ENCODE measurements at regions of chr17 and their contacts with region 1.

Region 1: DNA sequence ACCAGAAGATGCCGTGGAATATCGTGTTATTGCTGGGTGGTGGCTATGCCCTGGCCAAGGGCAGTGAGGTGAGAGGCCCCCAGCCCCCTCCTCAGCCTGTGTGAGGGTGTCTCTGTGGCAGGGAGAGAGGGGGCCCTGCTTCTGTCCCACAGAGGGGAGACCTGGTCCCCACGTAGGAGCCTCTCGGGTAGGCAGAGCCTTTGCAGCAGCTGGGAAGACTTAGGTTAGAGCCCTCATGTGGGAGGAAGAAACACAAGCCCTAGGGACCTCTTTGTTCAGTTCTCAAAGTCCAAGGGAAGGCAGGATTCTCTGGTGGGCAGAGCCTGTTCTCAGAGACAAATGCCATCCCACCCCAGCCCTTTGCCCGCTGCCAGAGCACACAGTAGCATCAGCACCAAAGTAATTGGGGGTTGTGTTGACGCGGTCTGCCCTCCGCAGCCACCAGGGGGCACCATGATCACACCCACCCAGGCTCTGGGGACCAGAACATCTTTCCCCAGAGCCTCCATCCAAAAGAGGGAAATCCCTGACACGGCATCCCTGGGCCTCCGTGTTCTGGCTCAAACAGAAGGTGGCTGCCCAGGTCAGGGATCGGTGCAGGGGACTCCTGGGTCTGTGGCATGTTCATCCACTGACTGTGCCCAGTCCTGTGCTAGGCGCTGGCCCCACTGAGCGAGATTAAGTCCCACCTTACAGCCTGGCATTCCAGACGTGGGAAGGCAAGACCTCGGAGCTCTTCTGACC is 11.5 kb upstream of the FOXN1 start:
- DNase-seq: no peak
- ATAC-seq: peak; percentile 95
- H3K4me3 ChIP-seq: no peak overlapping the region
- H3K27ac ChIP-seq: no peak overlapping the region
- H3K4me1 ChIP-seq: peaks cover 9% of the 10 kb centered on the region
- H3K27me3 ChIP-seq: no peaks in the 10 kb centered on the region
- CTCF ChIP-seq: peak; percentile 91 to 99 (median 92); a peak in 5 of 6 replicates
- EP300 ChIP-seq: no peak
- POLR2A ChIP-seq: no peak
- RAD21 ChIP-seq: peak; percentile 95

Region 2: DNA sequence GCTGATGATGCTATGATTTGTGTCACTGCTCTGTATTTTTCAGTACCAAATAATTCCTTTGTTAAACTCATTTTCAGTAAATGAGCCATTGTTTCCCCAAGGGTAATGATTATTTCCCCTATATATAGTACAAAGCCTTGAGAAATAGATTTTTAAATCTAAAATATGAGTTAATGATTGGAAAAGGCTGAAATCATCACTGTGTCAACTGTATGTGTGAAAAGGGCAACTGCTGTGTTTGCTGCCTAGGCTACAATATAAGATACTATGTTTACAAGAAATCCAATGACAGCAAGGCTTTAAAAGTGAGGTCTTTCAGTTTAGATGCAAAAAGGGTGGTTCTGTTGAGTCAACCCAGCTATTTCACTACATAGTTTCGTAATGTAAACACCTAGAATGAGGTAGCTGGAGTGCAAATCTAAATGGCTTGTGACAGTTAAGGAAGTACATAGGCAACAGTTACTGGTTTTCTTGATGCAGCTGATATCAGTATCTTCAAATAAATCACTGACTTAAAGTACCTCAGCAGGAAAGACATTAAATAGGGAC is 436.8 kb before region 1 on chr17:
- CTCF ChIA-PET with region 1: no interaction called
- POLR2A ChIA-PET with region 1: no interaction called
- RAD21 ChIA-PET with region 1: no interaction called
- SMC1A ChIA-PET with region 1: no interaction called
- in situ Hi-C with region 1: no loop called
- intact Hi-C with region 1: no loop called
- DNase-seq: peak; percentile 84
- ATAC-seq: peak; percentile 89
- H3K4me3 ChIP-seq: peak overlapping the region; percentile 22; the same call in 1 of the 2 replicates
- H3K27ac ChIP-seq: peak overlapping the region; percentile 66
- H3K4me1 ChIP-seq: peaks cover 52% of the 10 kb centered on the region
- H3K27me3 ChIP-seq: no peaks in the 10 kb centered on the region
- CTCF ChIP-seq: no peak
- EP300 ChIP-seq: peak; percentile 98 to 99
- POLR2A ChIP-seq: no peak
- RAD21 ChIP-seq: no peak

Region 3: GRCh38 chr17:28484296-28484695 is 10.3 kb before region 1 on chr17:
- CTCF ChIA-PET with region 1: interaction called, 18 read pairs
- POLR2A ChIA-PET with region 1: no interaction called
- RAD21 ChIA-PET with region 1: no interaction called
- SMC1A ChIA-PET with region 1: interaction called, 4 read pairs
- in situ Hi-C with region 1: no loop called
- intact Hi-C with region 1: no loop called
- DNase-seq: peak; percentile 79
- ATAC-seq: peak; percentile 98
- H3K4me3 ChIP-seq: peak overlapping the region; percentile 33; the same call in 1 of the 2 replicates
- H3K27ac ChIP-seq: peak overlapping the region; percentile 89
- H3K4me1 ChIP-seq: peaks cover 25% of the 10 kb centered on the region
- H3K27me3 ChIP-seq: no peaks in the 10 kb centered on the region
- CTCF ChIP-seq: no peak
- EP300 ChIP-seq: peak; percentile 39 to 45; a peak in 1 of 4 replicates
- POLR2A ChIP-seq: peak; percentile 42; the same call in 1 of the 2 replicates
- RAD21 ChIP-seq: 0 out of 2 replicates have a peak, but pooled peaks have one; percentile 10

Region 4: GRCh38 chr17:28540231-28540630 is 45.6 kb after region 1 on chr17:
- CTCF ChIA-PET with region 1: interaction called, 316 read pairs
- POLR2A ChIA-PET with region 1: interaction called, 4 read pairs
- RAD21 ChIA-PET with region 1: interaction called, 26 read pairs
- SMC1A ChIA-PET with region 1: interaction called, 32 read pairs
- in situ Hi-C with region 1: loop called (anchors 5 kb)
- intact Hi-C with region 1: loop called (anchors 1 kb)
- DNase-seq: no peak
- ATAC-seq: no peak
- H3K4me3 ChIP-seq: no peak overlapping the region
- H3K27ac ChIP-seq: no peak overlapping the region
- H3K4me1 ChIP-seq: no peaks in the 10 kb centered on the region
- H3K27me3 ChIP-seq: no peaks in the 10 kb centered on the region
- CTCF ChIP-seq: no peak
- EP300 ChIP-seq: no peak
- POLR2A ChIP-seq: no peak
- RAD21 ChIP-seq: no peak

Region 5: GRCh38 chr17:28545787-28546415 is 51.3 kb after region 1 on chr17:
- CTCF ChIA-PET with region 1: interaction called, 316 read pairs
- POLR2A ChIA-PET with region 1: interaction called, 48 read pairs
- RAD21 ChIA-PET with region 1: interaction called, 37 read pairs
- SMC1A ChIA-PET with region 1: interaction called, 53 read pairs
- in situ Hi-C with region 1: loop called (anchors 5 kb)
- intact Hi-C with region 1: no loop called
- DNase-seq: no peak
- ATAC-seq: no peak
- H3K4me3 ChIP-seq: no peak overlapping the region
- H3K27ac ChIP-seq: no peak overlapping the region
- H3K4me1 ChIP-seq: peaks cover 38% of the 10 kb centered on the region
- H3K27me3 ChIP-seq: no peaks in the 10 kb centered on the region
- CTCF ChIP-seq: no peak
- EP300 ChIP-seq: no peak
- POLR2A ChIP-seq: no peak
- RAD21 ChIP-seq: no peak

Region 6: DNA sequence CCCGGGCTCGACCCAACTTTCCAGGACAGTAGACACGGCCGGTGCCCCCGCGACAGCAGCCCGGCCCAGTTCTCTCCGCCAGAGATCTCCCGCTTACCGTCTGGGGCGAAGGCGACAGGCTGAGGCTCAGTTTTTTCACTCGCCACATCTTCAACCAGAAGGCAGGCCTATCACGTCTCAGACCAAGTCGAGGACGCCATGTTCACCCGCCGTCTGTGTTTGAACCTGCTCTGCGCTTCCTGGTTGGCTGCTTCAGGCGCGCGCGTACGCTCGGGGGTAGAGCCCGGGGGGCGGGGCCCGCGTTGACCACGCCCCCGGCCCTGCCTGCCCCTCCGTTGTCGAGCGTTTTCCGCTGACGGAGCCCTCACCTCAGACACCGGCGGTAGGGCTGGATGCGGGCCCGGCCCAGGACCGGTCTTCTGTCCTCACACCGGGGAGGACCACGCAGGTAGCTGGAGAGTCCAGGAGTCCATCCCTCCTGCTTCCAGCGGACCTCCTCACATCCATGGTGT is 104.2 kb after region 1 on chr17 and contains the start of gene SPAG5:
- CTCF ChIA-PET with region 1: no interaction called
- POLR2A ChIA-PET with region 1: no interaction called
- RAD21 ChIA-PET with region 1: interaction called, 5 read pairs
- SMC1A ChIA-PET with region 1: no interaction called
- in situ Hi-C with region 1: no loop called
- intact Hi-C with region 1: loop called (anchors 2 kb)
- DNase-seq: peak; percentile 80
- ATAC-seq: peak; percentile 95
- H3K4me3 ChIP-seq: peak within 1 kb of the TSS; percentile 98
- H3K27ac ChIP-seq: peak within 1 kb of the TSS; percentile 94
- H3K4me1 ChIP-seq: peaks cover 5% of the 10 kb centered on the region
- H3K27me3 ChIP-seq: no peaks in the 10 kb centered on the region
- CTCF ChIP-seq: no peak
- EP300 ChIP-seq: no peak
- POLR2A ChIP-seq: peak; percentile 95
- RAD21 ChIP-seq: no peak
- polyA plus RNA-seq, gene SPAG5: 73.5 to 139 TPM

Region 7: GRCh38 chr17:28612936-28613872 is 118.6 kb after region 1 on chr17:
- CTCF ChIA-PET with region 1: interaction called, 23 read pairs
- POLR2A ChIA-PET with region 1: no interaction called
- RAD21 ChIA-PET with region 1: interaction called, 9 read pairs
- SMC1A ChIA-PET with region 1: interaction called, 3 read pairs
- in situ Hi-C with region 1: no loop called
- intact Hi-C with region 1: loop called (anchors 5 kb)
- DNase-seq: no peak
- ATAC-seq: peak; percentile 87
- H3K4me3 ChIP-seq: no peak overlapping the region
- H3K27ac ChIP-seq: no peak overlapping the region; the same call in 1 of the 2 replicates
- H3K4me1 ChIP-seq: no peaks in the 10 kb centered on the region; the same call in none of the 2 replicates
- H3K27me3 ChIP-seq: no peaks in the 10 kb centered on the region
- CTCF ChIP-seq: peak; percentile 62 to 75 (median 69)
- EP300 ChIP-seq: no peak
- POLR2A ChIP-seq: 0 out of 2 replicates have a peak, but pooled peaks have one; percentile 5
- RAD21 ChIP-seq: peak; percentile 69

Measured in GM12878 (cell line).